AG04449 (cell line): ENCODE measurements at regions of chr6 and their contacts with region 1.

Region 1: GRCh38 chr6:134640975-134641429 is 308.9 kb downstream of the ALDH8A1 start:
- DNase-seq: peak; percentile 86
- H3K4me3 ChIP-seq: no peak overlapping the region
- CTCF ChIP-seq: peak; percentile 82

Region 2: GRCh38 chr6:134174672-134175198 is 466.3 kb before region 1 on chr6:
- CTCF ChIA-PET with region 1: interaction called, 45 read pairs
- POLR2A ChIA-PET with region 1: interaction called, 6 read pairs
- DNase-seq: no peak
- H3K4me3 ChIP-seq: peak overlapping the region; percentile 90
- CTCF ChIP-seq: no peak

Region 3: DNA sequence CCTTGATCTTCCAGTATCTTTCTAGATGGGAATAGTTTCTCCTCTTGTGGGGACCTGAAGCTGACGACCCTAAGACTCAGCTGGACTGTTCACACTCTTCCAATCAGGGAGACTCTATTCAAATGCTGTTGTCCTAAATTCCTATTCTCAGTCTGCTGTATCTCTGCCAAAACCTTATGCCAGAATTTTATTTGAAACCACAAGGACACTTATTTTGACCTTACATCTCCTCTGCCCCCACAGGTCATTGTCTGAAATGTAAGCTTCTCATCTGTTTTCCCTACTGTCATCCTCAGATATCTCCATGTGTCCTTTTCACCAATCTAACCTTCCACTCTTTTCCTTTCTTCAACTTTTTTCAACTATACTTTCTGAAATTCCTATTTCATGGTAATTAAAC is 33.6 kb before region 1 on chr6:
- CTCF ChIA-PET with region 1: interaction called, 10 read pairs
- POLR2A ChIA-PET with region 1: no interaction called
- DNase-seq: no peak
- H3K4me3 ChIP-seq: no peak overlapping the region
- CTCF ChIP-seq: no peak

Region 4: GRCh38 chr6:134626086-134626485 is 14.9 kb before region 1 on chr6:
- CTCF ChIA-PET with region 1: interaction called, 21 read pairs
- POLR2A ChIA-PET with region 1: no interaction called
- DNase-seq: no peak
- H3K4me3 ChIP-seq: no peak overlapping the region
- CTCF ChIP-seq: no peak

Region 5: GRCh38 chr6:134822920-134823709 is 182.1 kb after region 1 on chr6:
- CTCF ChIA-PET with region 1: interaction called, 22 read pairs
- POLR2A ChIA-PET with region 1: interaction called, 3 read pairs
- DNase-seq: no peak
- H3K4me3 ChIP-seq: no peak overlapping the region
- CTCF ChIP-seq: peak; percentile 79